ENCODE measurements at regions of chr14 and their contacts with region 1.

Region 1: DNA sequence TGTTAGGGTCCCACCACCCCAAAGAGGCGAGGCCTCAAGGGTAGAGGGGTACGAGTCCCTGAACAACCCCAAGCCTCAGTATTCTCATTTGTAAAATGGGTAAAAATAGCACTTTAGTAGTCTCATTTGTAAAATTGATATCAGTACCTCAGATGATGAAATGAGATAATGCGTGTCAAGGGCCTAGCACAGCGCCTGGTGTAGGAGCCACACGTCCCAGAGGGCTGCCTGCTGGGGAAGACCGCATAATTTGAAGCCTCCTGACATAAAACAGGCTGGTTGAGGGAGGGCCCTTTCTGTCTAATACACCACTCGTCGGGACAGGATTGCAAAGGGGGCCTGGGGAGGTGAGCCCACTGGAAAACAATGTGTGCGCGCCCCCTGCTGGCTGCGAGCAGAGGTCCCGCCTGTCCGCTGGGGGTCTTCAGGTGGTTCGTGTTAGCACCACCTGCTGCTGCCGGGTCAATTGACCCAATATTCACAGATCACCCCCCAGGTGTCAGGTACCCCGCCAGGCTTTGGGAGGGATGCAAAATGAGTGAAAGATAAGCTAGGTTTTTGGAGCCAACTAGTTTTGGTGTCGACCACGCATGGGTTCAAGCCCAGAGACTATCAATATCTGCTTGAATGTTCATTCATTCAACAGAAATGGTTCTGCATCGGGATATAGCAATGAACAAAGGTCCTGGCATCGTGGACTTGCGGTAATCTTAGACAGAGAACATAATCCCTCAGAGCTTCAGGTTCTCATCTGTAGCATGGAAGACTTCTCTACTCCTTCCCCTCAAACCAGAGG is 24.7 kb upstream of the IRF2BPL start:
- DNase-seq: peak; percentile 86
- H3K4me3 ChIP-seq: no peak overlapping the region
- H3K27ac ChIP-seq: no peak overlapping the region
- H3K4me1 ChIP-seq: peaks cover 4% of the 10 kb centered on the region
- CTCF ChIP-seq: peak; percentile 100

Region 2: GRCh38 chr14:76876076-76876475 is 177.2 kb before region 1 on chr14:
- CTCF ChIA-PET with region 1: interaction called, 3 read pairs
- POLR2A ChIA-PET with region 1: no interaction called
- intact Hi-C with region 1: loop called (anchors 1 kb)
- DNase-seq: peak; percentile 54
- H3K4me3 ChIP-seq: no peak overlapping the region
- H3K27ac ChIP-seq: no peak overlapping the region
- H3K4me1 ChIP-seq: no peaks in the 10 kb centered on the region
- CTCF ChIP-seq: peak; percentile 87

Region 3: GRCh38 chr14:76918751-76919543 is 134.3 kb before region 1 on chr14:
- CTCF ChIA-PET with region 1: interaction called, 10 read pairs
- POLR2A ChIA-PET with region 1: no interaction called
- intact Hi-C with region 1: no loop called
- DNase-seq: no peak
- H3K4me3 ChIP-seq: no peak overlapping the region
- H3K27ac ChIP-seq: no peak overlapping the region
- H3K4me1 ChIP-seq: peaks cover 3% of the 10 kb centered on the region
- CTCF ChIP-seq: no peak; the same call in 1 of the 2 replicates

Region 4: DNA sequence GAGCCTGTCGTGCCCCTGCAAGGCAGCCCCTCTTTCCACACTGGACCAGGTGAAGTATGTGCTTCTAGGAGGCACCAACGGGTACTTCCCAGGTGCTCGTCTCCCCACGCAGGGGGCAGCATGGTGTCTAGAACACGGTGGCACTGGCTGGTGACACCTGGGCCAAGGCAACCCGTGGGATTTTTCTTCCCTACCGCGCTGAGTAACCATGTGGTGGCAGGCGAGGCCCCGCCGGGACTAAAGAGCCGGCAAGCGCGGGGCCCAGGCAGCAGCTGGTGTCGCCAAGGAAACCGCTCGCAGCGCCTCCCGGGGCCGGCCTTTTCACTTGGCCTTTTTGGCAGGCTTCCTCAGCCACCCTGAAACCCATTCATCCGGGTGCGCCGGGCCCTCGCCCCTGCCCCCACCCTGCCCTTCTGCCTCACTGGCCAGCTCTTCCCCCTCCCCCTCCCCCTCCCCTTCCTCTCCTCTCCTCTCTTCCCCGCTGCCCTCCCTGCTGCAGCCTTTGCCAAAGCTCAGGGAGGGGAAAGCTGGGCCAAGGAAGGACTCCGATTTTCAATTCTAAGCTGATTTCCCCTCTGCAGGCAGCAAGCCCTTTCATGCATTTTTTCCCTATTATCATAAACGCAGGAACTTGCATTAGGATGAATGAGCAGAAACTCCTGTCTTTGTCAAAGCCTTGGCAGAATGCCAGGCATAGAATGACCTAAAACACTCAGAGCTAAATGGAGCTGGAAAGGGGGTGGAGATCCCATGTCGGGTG is 106.0 kb before region 1 on chr14:
- CTCF ChIA-PET with region 1: no interaction called
- POLR2A ChIA-PET with region 1: interaction called, 3 read pairs
- intact Hi-C with region 1: loop called (anchors 1 kb)
- DNase-seq: peak; percentile 80
- H3K4me3 ChIP-seq: no peak overlapping the region
- H3K27ac ChIP-seq: no peak overlapping the region
- H3K4me1 ChIP-seq: peaks cover 13% of the 10 kb centered on the region
- CTCF ChIP-seq: peak; percentile 62

Region 5: GRCh38 chr14:76956316-76957090 is 96.7 kb before region 1 on chr14:
- CTCF ChIA-PET with region 1: interaction called, 3 read pairs
- POLR2A ChIA-PET with region 1: no interaction called
- intact Hi-C with region 1: loop called (anchors 1 kb)
- DNase-seq: peak; percentile 72
- H3K4me3 ChIP-seq: peak overlapping the region; percentile 60
- H3K27ac ChIP-seq: peak overlapping the region; percentile 63
- H3K4me1 ChIP-seq: peaks cover 41% of the 10 kb centered on the region
- CTCF ChIP-seq: no peak

Region 6: GRCh38 chr14:77028384-77029231 is 24.6 kb before region 1 on chr14 and contains the start of gene IRF2BPL:
- CTCF ChIA-PET with region 1: interaction called, 3 read pairs
- POLR2A ChIA-PET with region 1: no interaction called
- intact Hi-C with region 1: loop called (anchors 1 kb)
- DNase-seq: peak; percentile 98
- H3K4me3 ChIP-seq: peak within 1 kb of the TSS; percentile 82
- H3K27ac ChIP-seq: peak within 1 kb of the TSS; percentile 93
- H3K4me1 ChIP-seq: peaks cover 63% of the 10 kb centered on the region
- CTCF ChIP-seq: no peak
- total RNA-seq, gene IRF2BPL: 18.8 and 25.8 TPM in 2 replicates

Region 7: DNA sequence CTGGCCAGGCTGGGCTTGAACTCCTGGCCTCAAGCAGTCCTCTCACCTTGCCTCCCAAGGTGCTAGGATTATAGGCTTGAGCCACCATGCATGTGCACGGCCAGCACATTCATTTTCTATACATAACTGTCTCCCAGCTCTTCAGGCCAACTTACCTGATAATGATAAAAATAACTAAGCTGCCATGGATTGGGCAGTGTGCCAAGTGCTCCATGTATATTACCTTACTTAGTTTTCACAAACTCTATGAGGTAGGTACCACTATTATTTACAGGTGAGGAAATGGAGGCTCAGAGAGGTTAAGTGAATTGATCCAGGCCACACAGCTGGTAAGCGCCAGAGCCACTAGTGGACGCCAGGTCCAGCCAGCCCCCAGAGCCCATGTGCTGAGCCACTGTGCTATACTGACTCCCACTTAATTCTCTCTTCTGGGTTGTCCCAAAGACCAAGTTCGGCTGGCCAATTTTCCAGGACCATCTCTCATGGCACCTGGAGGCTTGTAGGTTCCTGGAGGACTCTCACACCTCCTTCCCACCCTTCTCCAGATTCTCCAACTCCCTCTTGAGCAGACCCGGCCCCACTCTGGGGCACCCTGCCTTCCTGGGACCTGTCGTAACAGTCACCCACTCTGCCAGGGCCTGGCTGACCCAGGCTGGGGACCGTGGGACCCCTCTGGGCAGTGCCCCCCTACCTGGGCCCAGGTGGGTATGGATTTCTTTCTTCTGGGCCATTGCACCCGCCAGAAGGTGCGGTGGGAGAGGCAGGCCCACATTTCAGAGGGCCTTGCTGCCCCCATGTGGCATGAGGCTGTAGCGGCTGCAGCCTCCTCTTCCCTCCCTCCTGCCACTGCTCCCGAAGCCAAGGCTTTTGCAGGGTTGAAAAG is 14.6 kb after region 1 on chr14:
- CTCF ChIA-PET with region 1: interaction called, 3 read pairs
- POLR2A ChIA-PET with region 1: no interaction called
- intact Hi-C with region 1: loop called (anchors 1 kb)
- DNase-seq: peak; percentile 61
- H3K4me3 ChIP-seq: no peak overlapping the region
- H3K27ac ChIP-seq: no peak overlapping the region
- H3K4me1 ChIP-seq: no peaks in the 10 kb centered on the region
- CTCF ChIP-seq: peak; percentile 91

Region 8: DNA sequence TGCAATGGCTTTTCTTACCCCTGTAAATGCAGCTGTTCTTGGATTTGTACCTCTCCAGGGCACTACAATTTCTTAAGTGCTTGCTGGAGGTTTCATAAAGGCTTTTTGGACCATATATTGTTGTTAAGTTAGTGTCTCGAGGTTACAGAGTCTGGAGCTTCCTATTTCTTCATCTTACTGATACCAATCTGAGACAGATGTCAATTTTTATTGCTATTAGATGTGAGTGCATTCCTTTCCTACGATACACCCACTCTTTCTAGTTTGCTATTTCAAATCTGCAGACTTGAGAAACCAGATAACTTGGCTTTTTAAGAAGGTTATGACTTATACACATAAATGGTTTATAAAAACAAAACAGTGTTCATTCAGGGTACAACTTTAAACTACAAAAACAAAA is 368.0 kb after region 1 on chr14:
- CTCF ChIA-PET with region 1: no interaction called
- POLR2A ChIA-PET with region 1: no interaction called
- intact Hi-C with region 1: no loop called
- DNase-seq: no peak
- H3K4me3 ChIP-seq: no peak overlapping the region
- H3K27ac ChIP-seq: no peak overlapping the region
- H3K4me1 ChIP-seq: no peaks in the 10 kb centered on the region
- CTCF ChIP-seq: no peak

Region 9: DNA sequence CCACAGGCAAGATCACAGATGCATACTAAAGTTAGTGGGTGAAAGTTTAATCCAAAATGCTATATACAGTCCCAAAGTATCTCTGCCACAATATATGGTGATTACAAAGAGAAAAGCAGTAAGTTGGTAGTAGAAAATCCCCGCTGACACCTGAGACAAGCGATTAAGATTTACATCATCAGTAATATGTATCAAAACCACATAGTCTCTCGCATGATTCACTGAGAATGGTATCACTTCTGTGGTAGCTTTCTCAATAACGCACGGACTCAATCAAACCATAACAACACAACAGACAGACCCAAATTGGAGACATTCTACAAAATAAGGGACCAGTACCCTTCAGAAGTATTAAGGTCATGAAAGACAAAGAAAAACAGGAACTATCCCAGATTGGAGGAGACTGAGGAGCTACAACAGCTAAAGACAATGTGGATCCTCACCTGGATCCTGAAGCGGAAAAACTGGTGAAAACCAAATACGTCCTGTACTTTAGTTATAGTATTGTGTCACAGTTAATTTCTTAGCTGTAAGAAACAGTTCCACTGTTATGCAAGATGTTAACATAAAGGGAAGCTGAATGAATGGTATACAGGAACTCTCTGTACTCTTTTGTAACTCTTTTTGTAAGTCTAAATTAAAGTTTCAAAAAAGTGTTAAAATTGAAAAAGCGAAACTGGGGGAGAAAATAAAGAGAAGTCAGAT is 512.2 kb after region 1 on chr14:
- CTCF ChIA-PET with region 1: no interaction called
- POLR2A ChIA-PET with region 1: no interaction called
- intact Hi-C with region 1: no loop called
- DNase-seq: no peak
- H3K4me3 ChIP-seq: no peak overlapping the region
- H3K27ac ChIP-seq: no peak overlapping the region
- H3K4me1 ChIP-seq: no peaks in the 10 kb centered on the region
- CTCF ChIP-seq: no peak